ENCODE measurements at regions of chr19 and their contacts with region 1.

Region 1: GRCh38 chr19:4851551-4852290 is 15.7 kb downstream of the PLIN3 start:
- DNase-seq: peak; percentile 88

Region 2: DNA sequence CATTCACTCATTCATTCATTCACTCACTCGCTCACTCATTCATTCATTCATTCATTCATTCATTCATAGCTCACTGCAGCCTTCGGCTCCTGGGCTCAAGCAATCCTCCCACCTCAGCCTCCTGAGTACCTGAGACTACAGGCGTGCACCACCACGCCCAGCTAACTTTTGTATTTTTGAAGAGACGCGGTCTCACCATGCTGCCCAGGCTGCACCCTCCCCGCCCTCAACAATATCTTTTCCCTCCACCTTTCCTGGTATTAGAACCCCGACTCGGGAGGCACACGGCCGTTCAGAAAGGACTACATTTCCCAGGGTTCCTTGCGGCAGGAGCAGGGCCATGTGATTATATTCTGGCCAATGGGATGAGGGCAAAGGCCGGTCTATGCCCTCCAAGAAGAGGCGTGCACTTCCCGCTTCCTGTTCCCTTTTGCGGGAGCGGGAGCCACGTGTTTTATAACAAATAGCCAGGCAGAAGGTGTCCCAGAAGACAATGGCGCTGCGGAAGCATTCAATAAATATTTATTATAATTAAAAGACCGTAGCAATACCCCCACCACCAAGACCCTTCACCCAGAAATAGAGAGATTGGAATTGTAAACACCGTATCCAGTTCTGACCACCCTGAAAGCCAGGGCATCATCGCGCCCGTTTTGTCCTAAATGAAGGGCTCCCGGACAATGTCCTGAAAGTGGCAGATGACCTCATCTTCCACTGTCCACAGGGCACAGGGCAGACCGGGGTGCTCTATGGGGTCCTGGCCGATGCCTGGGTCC is 36.1 kb before region 1 on chr19:
- intact Hi-C with region 1: loop called in 1 of 2 experiments (anchors 5 kb)
- DNase-seq: peak; percentile 94